Activated naive CD4-positive, alpha-beta T cell treated with anti-CD3 and anti-CD28 coated beads, Interleukin-2, amount 10 ng/mL, durations not matched to agents 7 days and 5 days (primary cell): ENCODE measurements at regions of chr14 and their contacts with region 1.

Region 1: GRCh38 chr14:101964297-101965144 is at the start of gene DYNC1H1:
- DNase-seq: peak; percentile 90
- H3K4me3 Mint-ChIP-seq: peak within 1 kb of the TSS; percentile 91
- H3K27ac Mint-ChIP-seq: peak within 1 kb of the TSS; percentile 93
- H3K4me1 Mint-ChIP-seq: peaks cover 46% of the 10 kb centered on the region
- H3K27me3 Mint-ChIP-seq: peaks cover 10% of the 10 kb centered on the region

Region 2: GRCh38 chr14:101953151-101953550 is 11.4 kb before region 1 on chr14:
- CTCF ChIA-PET with region 1: interaction called, 14 read pairs
- DNase-seq: no peak
- H3K4me3 Mint-ChIP-seq: no peak overlapping the region
- H3K27ac Mint-ChIP-seq: no peak overlapping the region
- H3K4me1 Mint-ChIP-seq: peaks cover 15% of the 10 kb centered on the region
- H3K27me3 Mint-ChIP-seq: peaks cover 3% of the 10 kb centered on the region

Region 3: GRCh38 chr14:102088012-102088792 is 123.7 kb after region 1 on chr14:
- CTCF ChIA-PET with region 1: interaction called, 10 read pairs
- DNase-seq: peak; percentile 67
- H3K4me3 Mint-ChIP-seq: peak overlapping the region; percentile 89
- H3K27ac Mint-ChIP-seq: peak overlapping the region; percentile 93
- H3K4me1 Mint-ChIP-seq: peaks cover 53% of the 10 kb centered on the region
- H3K27me3 Mint-ChIP-seq: no peaks in the 10 kb centered on the region

Region 4: DNA sequence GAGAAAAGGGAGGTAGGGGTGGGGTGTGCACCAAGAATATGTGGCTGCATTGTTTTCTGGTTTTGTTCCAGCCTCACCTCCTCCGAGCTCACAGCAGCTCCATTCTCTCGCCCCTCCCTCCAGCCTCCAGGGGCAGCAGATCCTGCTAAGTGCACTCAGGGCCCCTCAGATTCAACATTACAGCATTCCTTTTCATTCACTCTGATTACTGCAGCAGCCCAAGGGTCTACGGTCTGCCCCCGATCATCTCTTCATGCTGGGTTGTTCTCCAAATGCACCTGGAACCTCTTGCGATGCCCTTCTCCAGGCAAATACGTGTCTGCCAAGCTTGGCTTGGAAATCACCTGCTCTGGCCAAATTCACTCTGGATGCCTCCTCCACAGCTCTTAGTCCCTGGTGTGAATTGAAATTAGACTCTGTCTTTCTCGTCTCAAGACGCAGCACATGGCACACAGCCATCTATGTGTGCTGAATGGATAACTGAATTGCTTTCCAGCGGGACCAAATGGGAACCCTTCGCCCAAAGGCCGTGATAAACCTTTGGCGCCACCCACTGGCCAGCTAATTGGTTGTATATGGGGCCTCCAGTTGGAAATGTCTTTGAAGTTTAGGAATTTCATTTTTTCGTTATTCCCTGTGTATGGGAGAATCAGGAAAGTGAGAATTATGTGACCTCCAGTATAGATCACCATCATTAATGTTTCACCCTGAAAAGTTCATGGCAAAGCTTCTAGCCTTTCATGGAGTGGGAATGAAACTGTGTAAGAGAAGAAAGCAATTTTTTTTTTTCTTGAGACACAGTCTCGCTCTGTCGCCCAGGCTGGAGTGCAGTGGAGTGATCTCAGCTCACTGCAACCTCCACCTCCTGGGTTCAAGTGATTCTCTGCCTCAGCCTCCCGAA is 131.9 kb after region 1 on chr14:
- CTCF ChIA-PET with region 1: interaction called, 42 read pairs
- DNase-seq: peak; percentile 82
- H3K4me3 Mint-ChIP-seq: no peak overlapping the region
- H3K27ac Mint-ChIP-seq: no peak overlapping the region
- H3K4me1 Mint-ChIP-seq: peaks cover 5% of the 10 kb centered on the region
- H3K27me3 Mint-ChIP-seq: no peaks in the 10 kb centered on the region